IMR-90 (cell line): ENCODE measurements at regions of chr7 and their contacts with region 1.

Region 1: DNA sequence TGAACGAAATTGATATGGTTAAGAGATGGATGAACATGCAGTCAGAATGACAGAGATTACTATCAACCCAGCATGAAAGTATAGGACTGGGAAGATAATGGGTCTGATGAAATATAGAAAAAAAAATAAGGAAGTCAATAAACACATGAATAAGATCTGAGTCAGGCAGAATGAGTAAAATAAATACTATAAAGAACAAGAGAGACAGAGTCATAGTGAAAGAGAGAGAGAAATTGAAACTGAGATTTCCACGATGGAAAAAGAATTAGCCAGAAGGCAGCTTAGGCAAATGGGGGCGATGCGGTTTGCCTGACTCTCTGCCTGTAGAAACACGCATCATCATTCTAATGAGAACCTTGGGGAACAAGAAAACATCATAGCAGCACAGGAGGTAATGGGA is 26.6 kb downstream of the SEMA3D start:
- DNase-seq: peak; percentile 68
- ATAC-seq: peak; percentile 81
- H3K4me3 ChIP-seq: peak overlapping the region; percentile 18; the same call in 1 of the 2 replicates
- H3K27ac ChIP-seq: peak overlapping the region; percentile 8; the same call in 1 of the 2 replicates
- H3K4me1 ChIP-seq: no peaks in the 10 kb centered on the region; the same call in 1 of the 2 replicates
- H3K27me3 ChIP-seq: no peaks in the 10 kb centered on the region
- CTCF ChIP-seq: no peak
- POLR2A ChIP-seq: no peak
- RAD21 ChIP-seq: no peak

Region 2: DNA sequence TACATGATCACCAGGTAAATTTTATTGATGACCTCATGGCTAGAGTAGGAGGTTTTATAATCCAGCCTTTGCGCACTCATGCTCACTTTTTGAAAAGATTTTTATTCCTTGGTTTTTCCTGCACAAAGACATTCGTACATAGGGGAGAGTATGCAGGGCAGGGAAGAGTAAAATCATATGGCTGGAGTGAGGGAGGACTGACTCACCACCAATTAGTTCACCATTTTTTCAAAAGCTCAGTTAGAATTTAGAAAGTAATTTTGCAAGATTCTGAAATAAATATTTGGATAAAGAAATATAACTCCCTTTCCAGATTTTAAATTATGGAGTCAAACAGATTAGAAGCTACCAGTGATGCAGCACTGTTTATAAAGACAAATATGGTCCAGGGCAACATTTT is 85.2 kb before region 1 on chr7:
- CTCF ChIA-PET with region 1: no interaction called
- POLR2A ChIA-PET with region 1: no interaction called
- dilution Hi-C with region 1: no loop called
- in situ Hi-C with region 1: no loop called
- intact Hi-C with region 1: loop called (anchors 5 kb)
- DNase-seq: peak; percentile 59
- ATAC-seq: peak; percentile 84
- H3K4me3 ChIP-seq: no peak overlapping the region
- H3K27ac ChIP-seq: no peak overlapping the region
- H3K4me1 ChIP-seq: peaks cover 9% of the 10 kb centered on the region
- H3K27me3 ChIP-seq: no peaks in the 10 kb centered on the region
- CTCF ChIP-seq: no peak
- POLR2A ChIP-seq: no peak
- RAD21 ChIP-seq: no peak

Region 3: DNA sequence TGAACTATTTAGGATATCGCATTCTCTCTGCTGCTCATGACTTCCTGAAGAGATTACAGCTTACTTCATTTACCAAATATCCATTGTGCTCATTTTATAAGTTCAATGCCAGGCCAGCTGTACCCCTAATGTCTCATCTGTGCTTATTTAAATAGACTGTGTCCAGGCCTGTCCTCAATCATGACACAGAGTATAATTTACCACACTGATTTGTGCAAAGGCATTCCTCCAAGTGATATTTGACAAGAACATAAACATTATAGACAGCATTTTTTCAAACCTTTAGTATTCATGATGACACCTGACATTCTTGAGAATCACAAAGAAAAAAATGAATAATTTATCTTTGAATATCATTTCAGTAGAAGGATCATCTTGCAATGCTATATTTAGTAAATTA is 286.8 kb after region 1 on chr7:
- CTCF ChIA-PET with region 1: no interaction called
- POLR2A ChIA-PET with region 1: no interaction called
- dilution Hi-C with region 1: no loop called
- in situ Hi-C with region 1: no loop called
- intact Hi-C with region 1: no loop called
- DNase-seq: no peak
- ATAC-seq: no peak
- H3K4me3 ChIP-seq: no peak overlapping the region
- H3K27ac ChIP-seq: no peak overlapping the region
- H3K4me1 ChIP-seq: no peaks in the 10 kb centered on the region
- H3K27me3 ChIP-seq: no peaks in the 10 kb centered on the region
- CTCF ChIP-seq: no peak
- POLR2A ChIP-seq: no peak
- RAD21 ChIP-seq: no peak